WTC11 (cell line): ENCODE measurements at regions of chr2 and their contacts with region 1.

Region 1: DNA sequence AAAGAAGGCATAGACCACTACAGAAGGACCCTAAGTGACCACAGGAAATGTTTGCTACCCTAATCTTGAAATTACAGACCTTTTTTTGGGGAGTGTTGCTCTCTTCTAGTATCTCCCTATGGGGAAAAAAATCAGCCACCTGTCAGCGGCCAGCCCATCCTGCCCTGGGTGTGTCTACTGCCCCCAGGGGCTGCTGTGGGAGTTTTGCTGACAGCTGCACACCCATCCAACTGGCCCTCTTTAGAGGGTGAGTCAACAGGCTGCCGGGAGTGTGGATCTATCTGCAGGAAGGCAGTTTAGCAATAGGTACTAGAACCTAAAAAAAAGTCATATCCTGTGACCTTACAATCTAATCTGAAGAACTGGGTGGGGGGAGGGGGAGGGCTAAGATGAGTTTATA is 796 bp upstream of the DYSF start:
- DNase-seq: peak; percentile 59
- ATAC-seq: no peak
- H3K4me3 Mint-ChIP-seq: peak overlapping the region; percentile 65
- H3K27ac Mint-ChIP-seq: no peak overlapping the region
- H3K4me1 Mint-ChIP-seq: peaks cover 62% of the 10 kb centered on the region
- H3K27me3 Mint-ChIP-seq: peaks cover 44% of the 10 kb centered on the region
- CTCF ChIP-seq: no peak

Region 2: DNA sequence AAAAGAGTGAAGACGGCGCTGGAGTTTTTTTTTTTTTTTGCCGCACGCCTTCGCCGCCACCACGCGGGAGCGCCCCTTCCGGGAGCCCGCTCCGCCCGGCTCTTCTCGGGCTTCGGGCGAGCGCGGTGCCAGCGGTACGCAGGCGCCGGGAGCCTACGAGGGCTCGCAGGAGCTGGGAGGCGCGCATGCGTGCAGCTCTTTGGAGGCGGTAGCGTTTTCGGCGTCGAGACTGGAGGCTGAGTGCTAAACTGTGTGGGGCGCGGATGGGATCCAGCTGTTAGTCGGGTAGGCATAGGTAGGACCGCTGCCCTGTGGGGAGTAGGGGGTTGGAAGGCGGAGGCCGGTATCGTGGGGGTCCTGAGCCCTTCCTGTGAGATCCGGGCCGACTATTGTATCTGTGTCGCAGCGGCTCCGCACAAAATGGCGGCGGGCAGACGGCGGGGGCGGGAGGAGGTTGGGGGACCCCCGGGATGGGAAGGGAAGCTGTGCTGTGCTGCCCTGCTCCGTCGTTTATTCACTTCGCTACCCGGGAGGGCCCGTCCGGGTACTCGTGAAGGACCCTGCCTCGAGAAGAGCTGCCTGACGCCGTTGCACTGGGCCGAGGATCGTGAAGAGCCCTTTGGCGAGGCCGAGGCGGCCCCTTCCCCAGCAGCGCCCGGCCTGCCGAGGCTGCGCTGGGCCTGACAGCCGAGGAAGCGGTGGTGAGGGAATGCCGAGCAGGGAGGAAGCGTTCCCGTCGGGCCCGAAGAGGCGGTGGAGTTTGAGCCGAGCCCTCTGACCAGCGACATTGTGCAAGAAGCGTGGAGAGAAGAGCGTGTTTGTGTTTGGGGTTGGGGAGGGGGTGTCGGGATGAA is 120.8 kb before region 1 on chr2 and contains the start of gene ZNF638:
- CTCF ChIA-PET with region 1: interaction called, 10 read pairs
- POLR2A ChIA-PET with region 1: no interaction called
- DNase-seq: peak; percentile 91
- ATAC-seq: peak; percentile 92
- H3K4me3 Mint-ChIP-seq: peak within 1 kb of the TSS; percentile 99
- H3K27ac Mint-ChIP-seq: peak within 1 kb of the TSS; percentile 100
- H3K4me1 Mint-ChIP-seq: peaks cover 37% of the 10 kb centered on the region
- H3K27me3 Mint-ChIP-seq: no peaks in the 10 kb centered on the region
- CTCF ChIP-seq: peak; percentile 62; the same call in 1 of the 2 replicates
- total RNA-seq, gene ZNF638: 109 to 131 TPM (median 128 TPM) in 3 replicates

Region 3: GRCh38 chr2:71466303-71467173 is 14.0 kb after region 1 on chr2:
- CTCF ChIA-PET with region 1: interaction called, 108 read pairs
- POLR2A ChIA-PET with region 1: no interaction called
- DNase-seq: peak; percentile 66
- ATAC-seq: peak; percentile 59
- H3K4me3 Mint-ChIP-seq: peak overlapping the region; percentile 72
- H3K27ac Mint-ChIP-seq: no peak overlapping the region
- H3K4me1 Mint-ChIP-seq: peaks cover 15% of the 10 kb centered on the region
- H3K27me3 Mint-ChIP-seq: peaks cover 29% of the 10 kb centered on the region
- CTCF ChIP-seq: no peak

Region 4: GRCh38 chr2:71477231-71477691 is 24.7 kb after region 1 on chr2:
- CTCF ChIA-PET with region 1: interaction called, 11 read pairs
- POLR2A ChIA-PET with region 1: no interaction called
- DNase-seq: no peak
- ATAC-seq: no peak
- H3K4me3 Mint-ChIP-seq: no peak overlapping the region
- H3K27ac Mint-ChIP-seq: no peak overlapping the region
- H3K4me1 Mint-ChIP-seq: peaks cover 23% of the 10 kb centered on the region
- H3K27me3 Mint-ChIP-seq: peaks cover 2% of the 10 kb centered on the region; the same call in 1 of the 2 replicates
- CTCF ChIP-seq: no peak

Region 5: DNA sequence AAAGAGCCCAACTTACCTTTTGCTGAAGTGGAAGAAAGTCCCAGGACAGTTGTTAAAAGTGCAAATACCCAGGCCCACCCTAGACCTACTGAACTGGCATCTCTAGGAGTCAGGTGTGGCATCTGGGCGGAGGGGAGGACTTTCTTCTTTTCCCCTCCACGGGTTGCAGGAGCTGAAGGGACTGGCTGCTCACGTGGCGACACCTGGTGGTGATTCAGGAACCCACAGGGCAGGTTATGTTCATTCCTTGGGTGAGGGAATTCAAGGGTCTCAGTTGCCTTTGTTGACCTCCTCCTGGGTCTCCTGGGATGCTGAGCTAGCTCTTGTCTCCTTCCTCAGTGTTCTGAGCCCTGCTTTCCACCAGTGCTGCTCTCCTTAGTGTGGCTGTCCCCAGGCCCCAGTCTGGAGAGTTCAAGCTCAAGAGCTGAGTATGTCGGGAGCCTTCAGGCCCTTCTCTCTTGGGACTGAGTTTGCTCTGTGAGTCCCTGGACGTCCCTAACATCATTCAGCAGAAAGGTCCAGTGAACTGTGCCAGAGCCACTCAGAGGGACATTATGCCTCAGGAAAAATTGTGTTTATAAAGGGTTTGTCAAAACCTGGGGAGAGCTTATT is 57.7 kb after region 1 on chr2:
- CTCF ChIA-PET with region 1: interaction called, 47 read pairs
- POLR2A ChIA-PET with region 1: interaction called, 4 read pairs
- DNase-seq: peak; percentile 89
- ATAC-seq: peak; percentile 85
- H3K4me3 Mint-ChIP-seq: no peak overlapping the region
- H3K27ac Mint-ChIP-seq: no peak overlapping the region
- H3K4me1 Mint-ChIP-seq: no peaks in the 10 kb centered on the region
- H3K27me3 Mint-ChIP-seq: no peaks in the 10 kb centered on the region
- CTCF ChIP-seq: peak; percentile 79

Region 6: GRCh38 chr2:71558300-71559051 is 105.9 kb after region 1 on chr2:
- CTCF ChIA-PET with region 1: no interaction called
- POLR2A ChIA-PET with region 1: no interaction called
- DNase-seq: no peak
- ATAC-seq: no peak; the same call in 1 of the 2 replicates
- H3K4me3 Mint-ChIP-seq: no peak overlapping the region
- H3K27ac Mint-ChIP-seq: no peak overlapping the region
- H3K4me1 Mint-ChIP-seq: peaks cover 16% of the 10 kb centered on the region
- H3K27me3 Mint-ChIP-seq: no peaks in the 10 kb centered on the region
- CTCF ChIP-seq: no peak